Activated CD4-positive, alpha-beta T cell treated with anti-CD3 and anti-CD28 coated beads, Interleukin-2, amount 10 ng/mL, durations not matched to agents 24 days and 14 days (primary cell): ENCODE measurements at regions of chr17 and their contacts with region 1.

Region 1: DNA sequence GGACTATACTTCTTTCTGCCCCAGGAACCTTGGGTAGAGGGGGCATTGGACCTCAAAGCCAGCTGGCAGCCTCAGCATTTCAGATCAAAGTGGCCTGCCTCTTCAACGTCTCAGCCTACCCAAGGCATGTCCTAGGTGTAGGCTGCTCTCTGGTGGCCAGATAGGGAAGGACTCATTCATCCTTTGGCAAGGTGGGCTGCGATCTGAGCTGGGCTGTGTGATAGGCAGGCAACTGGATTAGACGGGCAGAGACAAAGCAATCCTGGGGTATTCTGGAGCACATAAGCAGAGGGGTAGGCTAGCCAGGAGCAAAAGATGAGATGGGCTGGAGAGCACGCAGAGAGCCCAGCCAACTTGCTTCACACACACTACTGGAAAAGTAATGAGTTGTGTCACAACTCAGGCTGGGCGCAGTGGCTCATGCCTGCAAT is 8.8 kb upstream of the NAGLU start:
- DNase-seq: peak; percentile 92
- H3K4me3 Mint-ChIP-seq: no peak overlapping the region
- H3K27ac Mint-ChIP-seq: no peak overlapping the region
- H3K4me1 Mint-ChIP-seq: peaks cover 24% of the 10 kb centered on the region
- H3K27me3 Mint-ChIP-seq: peaks cover 7% of the 10 kb centered on the region

Region 2: GRCh38 chr17:42428141-42428944 is 98.9 kb before region 1 on chr17:
- intact Hi-C with region 1: loop called (anchors 2 kb)
- DNase-seq: peak; percentile 82
- H3K4me3 Mint-ChIP-seq: no peak overlapping the region
- H3K27ac Mint-ChIP-seq: no peak overlapping the region
- H3K4me1 Mint-ChIP-seq: peaks cover under 1% of the 10 kb centered on the region
- H3K27me3 Mint-ChIP-seq: peaks cover 43% of the 10 kb centered on the region

Region 3: GRCh38 chr17:42484304-42484703 is 43.0 kb before region 1 on chr17:
- intact Hi-C with region 1: loop called (anchors 1 kb)
- DNase-seq: peak; percentile 93
- H3K4me3 Mint-ChIP-seq: peak overlapping the region; percentile 51
- H3K27ac Mint-ChIP-seq: peak overlapping the region; percentile 52
- H3K4me1 Mint-ChIP-seq: peaks cover 16% of the 10 kb centered on the region
- H3K27me3 Mint-ChIP-seq: peaks cover 3% of the 10 kb centered on the region

Region 4: DNA sequence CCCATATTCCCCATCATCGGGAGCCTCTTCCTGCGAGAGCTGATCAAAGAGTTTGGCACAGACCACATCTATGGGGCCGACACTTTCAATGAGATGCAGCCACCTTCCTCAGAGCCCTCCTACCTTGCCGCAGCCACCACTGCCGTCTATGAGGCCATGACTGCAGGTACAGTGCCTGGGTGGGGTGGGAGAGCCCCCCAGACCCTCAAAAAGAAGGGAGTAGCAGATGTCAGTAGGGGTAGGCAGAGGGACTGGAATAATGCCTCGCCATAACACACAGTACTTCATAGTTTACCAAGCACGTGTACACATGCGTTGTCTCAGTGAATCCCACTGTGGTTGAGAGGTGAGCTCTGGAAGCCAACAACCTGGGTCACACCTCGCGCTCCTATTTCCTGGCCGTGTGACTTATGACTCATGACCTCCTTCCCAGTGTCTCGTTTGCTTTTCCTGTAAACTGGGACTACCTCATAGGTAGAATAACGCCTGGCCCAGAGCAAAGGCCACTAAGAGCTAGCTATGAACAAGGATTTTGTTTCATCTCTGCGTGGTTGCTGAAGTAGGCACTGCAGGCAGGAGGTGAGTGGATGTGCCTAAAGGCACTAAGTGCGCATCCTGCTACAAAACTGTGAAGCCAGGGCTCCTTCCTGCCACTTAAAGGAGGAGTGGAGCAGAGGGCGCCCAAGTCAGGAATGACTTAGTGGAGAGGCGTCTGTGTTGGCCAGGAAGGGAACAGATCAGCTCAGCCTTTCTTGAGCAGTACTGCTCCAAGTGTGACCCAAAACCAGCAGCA is 13.9 kb after region 1 on chr17:
- intact Hi-C with region 1: no loop called
- DNase-seq: no peak
- H3K4me3 Mint-ChIP-seq: peak overlapping the region; percentile 44
- H3K27ac Mint-ChIP-seq: peak overlapping the region; percentile 74
- H3K4me1 Mint-ChIP-seq: peaks cover 22% of the 10 kb centered on the region
- H3K27me3 Mint-ChIP-seq: no peaks in the 10 kb centered on the region